Endothelial cell of umbilical vein (primary cell): ENCODE measurements at regions of chr17 and their contacts with region 1.

Region 1: GRCh38 chr17:43546319-43547188 is at the start of gene ETV4:
- DNase-seq: peak; percentile 95
- H3K4me3 ChIP-seq: peak within 1 kb of the TSS; percentile 28 to 75 (median 56)
- H3K27ac ChIP-seq: peak within 1 kb of the TSS; percentile 90
- H3K4me1 ChIP-seq: peaks cover 23% of the 10 kb centered on the region
- H3K27me3 ChIP-seq: no peaks in the 10 kb centered on the region
- CTCF ChIP-seq: no peak
- POLR2A ChIP-seq: no peak
- total RNA-seq, gene ETV4: 32.2 and 39.4 TPM in 2 replicates

Region 2: GRCh38 chr17:43517615-43518386 is 28.8 kb before region 1 on chr17:
- CTCF ChIA-PET with region 1: interaction called, 4 read pairs
- POLR2A ChIA-PET with region 1: no interaction called
- dilution Hi-C with region 1: no loop called
- intact Hi-C with region 1: loop called (anchors 1 kb)
- DNase-seq: peak; percentile 72
- H3K4me3 ChIP-seq: no peak overlapping the region
- H3K27ac ChIP-seq: peak overlapping the region; percentile 71
- H3K4me1 ChIP-seq: peaks cover 22% of the 10 kb centered on the region
- H3K27me3 ChIP-seq: no peaks in the 10 kb centered on the region
- CTCF ChIP-seq: no peak
- POLR2A ChIP-seq: no peak

Region 3: GRCh38 chr17:43530278-43531081 is 16.1 kb before region 1 on chr17:
- CTCF ChIA-PET with region 1: interaction called, 12 read pairs
- POLR2A ChIA-PET with region 1: no interaction called
- dilution Hi-C with region 1: no loop called
- intact Hi-C with region 1: loop called (anchors 1 kb)
- DNase-seq: peak; percentile 92
- H3K4me3 ChIP-seq: peak overlapping the region in 1 of 3 experiments; percentile 1
- H3K27ac ChIP-seq: peak overlapping the region; percentile 83
- H3K4me1 ChIP-seq: peaks cover 23% of the 10 kb centered on the region
- H3K27me3 ChIP-seq: no peaks in the 10 kb centered on the region
- CTCF ChIP-seq: no peak
- POLR2A ChIP-seq: peak; percentile 46

Region 4: GRCh38 chr17:43616852-43617251 is 70.3 kb after region 1 on chr17:
- CTCF ChIA-PET with region 1: no interaction called
- POLR2A ChIA-PET with region 1: no interaction called
- dilution Hi-C with region 1: no loop called
- intact Hi-C with region 1: no loop called
- DNase-seq: no peak
- H3K4me3 ChIP-seq: no peak overlapping the region
- H3K27ac ChIP-seq: no peak overlapping the region
- H3K4me1 ChIP-seq: no peaks in the 10 kb centered on the region
- H3K27me3 ChIP-seq: peaks cover 0 to 3% of the 10 kb centered on the region in 2 experiments
- CTCF ChIP-seq: no peak
- POLR2A ChIP-seq: no peak